CD4-positive, alpha-beta memory T cell (primary cell): ENCODE measurements at regions of chr5 and their contacts with region 1.

Region 1: DNA sequence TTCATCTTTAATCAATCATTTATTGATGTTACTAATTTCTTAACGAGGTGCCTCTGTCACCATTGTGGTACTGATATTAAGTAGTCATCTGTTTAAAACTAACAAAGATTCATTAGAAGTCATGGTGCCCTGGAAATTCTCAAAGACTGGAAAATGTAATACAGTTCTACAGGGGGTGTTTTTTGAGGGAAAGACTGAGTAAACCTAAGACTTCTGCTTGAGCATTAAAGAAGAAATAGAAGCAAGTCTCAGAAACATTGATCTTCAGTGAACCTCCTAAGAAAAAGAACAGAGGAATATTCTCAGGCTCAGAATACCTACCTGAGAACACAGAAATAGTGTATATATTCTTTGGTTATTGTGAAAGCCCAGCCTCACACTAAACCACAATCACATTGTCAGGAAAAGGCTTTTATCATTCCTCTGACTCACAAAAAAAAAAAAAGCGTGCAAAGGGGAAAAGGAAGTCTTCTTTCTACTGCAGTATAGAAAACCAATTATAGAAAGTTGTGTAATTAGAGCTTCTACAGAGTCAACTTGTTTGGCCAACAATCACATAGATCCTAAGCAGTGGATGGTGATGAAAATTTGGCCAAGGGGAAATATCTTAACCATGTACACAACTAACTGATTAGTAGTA is 60.8 kb downstream of the HINT1 start:
- DNase-seq: no peak
- H3K4me3 ChIP-seq: no peak overlapping the region
- H3K4me3 Mint-ChIP-seq: no peak overlapping the region
- H3K27ac ChIP-seq: no peak overlapping the region
- H3K27ac Mint-ChIP-seq: no peak overlapping the region
- H3K4me1 ChIP-seq: peaks cover 7% of the 10 kb centered on the region
- H3K4me1 Mint-ChIP-seq: peaks cover 6 to 8% (median 7%) of the 10 kb centered on the region in 4 donors
- H3K27me3 ChIP-seq: no peaks in the 10 kb centered on the region
- H3K27me3 Mint-ChIP-seq: peaks cover 0 to 2% of the 10 kb centered on the region in 2 donors

Region 2: GRCh38 chr5:130871346-130872086 is 232.8 kb before region 1 on chr5:
- CTCF ChIA-PET with region 1: interaction called, 56 read pairs
- POLR2A ChIA-PET with region 1: no interaction called
- intact Hi-C with region 1: no loop called
- DNase-seq: peak; percentile 34 to 60 (median 49)
- H3K4me3 ChIP-seq: no peak overlapping the region
- H3K4me3 Mint-ChIP-seq: no peak overlapping the region
- H3K27ac ChIP-seq: no peak overlapping the region
- H3K27ac Mint-ChIP-seq: no peak overlapping the region
- H3K4me1 ChIP-seq: no peaks in the 10 kb centered on the region
- H3K4me1 Mint-ChIP-seq: no peaks in the 10 kb centered on the region
- H3K27me3 ChIP-seq: no peaks in the 10 kb centered on the region
- H3K27me3 Mint-ChIP-seq: no peaks in the 10 kb centered on the region